CD8-positive, alpha-beta T cell (primary cell): ENCODE measurements at regions of chr20 and their contacts with region 1.

Region 1: GRCh38 chr20:3679749-3680700 is 1.8 kb downstream of the ADAM33 start:
- DNase-seq: no peak
- ATAC-seq: no peak
- H3K4me3 ChIP-seq: no peak overlapping the region
- H3K4me3 Mint-ChIP-seq: no peak overlapping the region
- H3K27ac ChIP-seq: no peak overlapping the region
- H3K27ac Mint-ChIP-seq: no peak overlapping the region
- H3K4me1 ChIP-seq: peaks cover 4% of the 10 kb centered on the region
- H3K4me1 Mint-ChIP-seq: peaks cover 10% of the 10 kb centered on the region
- H3K27me3 ChIP-seq: peaks cover 0 to 10% of the 10 kb centered on the region in 2 experiments
- H3K27me3 Mint-ChIP-seq: peaks cover 45% of the 10 kb centered on the region
- CTCF ChIP-seq: no peak

Region 2: GRCh38 chr20:3350422-3350821 is 329.6 kb before region 1 on chr20:
- CTCF ChIA-PET with region 1: no interaction called
- POLR2A ChIA-PET with region 1: no interaction called
- intact Hi-C with region 1: no loop called
- DNase-seq: no peak
- ATAC-seq: no peak
- H3K4me3 ChIP-seq: no peak overlapping the region
- H3K4me3 Mint-ChIP-seq: no peak overlapping the region
- H3K27ac ChIP-seq: no peak overlapping the region
- H3K27ac Mint-ChIP-seq: no peak overlapping the region
- H3K4me1 ChIP-seq: no peaks in the 10 kb centered on the region
- H3K4me1 Mint-ChIP-seq: no peaks in the 10 kb centered on the region
- H3K27me3 ChIP-seq: no peaks in the 10 kb centered on the region
- H3K27me3 Mint-ChIP-seq: no peaks in the 10 kb centered on the region
- CTCF ChIP-seq: no peak

Region 3: DNA sequence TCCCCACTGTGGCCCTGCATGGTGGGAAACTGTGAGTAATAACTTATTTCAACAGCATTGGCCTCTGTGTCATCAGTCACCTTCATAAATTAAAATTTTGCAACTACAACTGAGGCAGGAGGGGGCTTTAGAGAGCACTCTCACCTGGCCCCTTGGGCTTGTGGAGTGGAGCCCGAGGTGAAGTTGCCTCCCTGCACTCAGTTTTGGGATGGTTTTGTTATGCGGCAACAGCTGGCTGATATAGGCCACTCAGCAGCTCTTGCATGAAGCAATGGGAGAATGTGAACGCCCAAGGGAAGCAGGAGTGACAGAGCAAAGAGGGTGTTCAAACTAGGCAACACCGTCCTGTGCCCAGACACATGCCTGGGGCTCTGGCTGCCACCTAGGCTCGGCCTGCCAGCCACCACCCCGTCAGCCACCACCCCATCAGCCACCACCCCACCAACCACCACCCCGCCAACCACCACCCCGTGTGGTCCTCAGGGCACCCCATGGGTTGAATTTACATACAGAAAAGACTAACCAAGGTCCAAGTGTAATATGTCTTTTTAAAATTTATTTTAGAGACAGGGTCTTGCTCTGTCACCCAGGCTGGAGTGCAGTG is 12.5 kb before region 1 on chr20:
- CTCF ChIA-PET with region 1: interaction called, 29 read pairs
- POLR2A ChIA-PET with region 1: interaction called, 3 read pairs
- intact Hi-C with region 1: no loop called
- DNase-seq: no peak
- ATAC-seq: no peak
- H3K4me3 ChIP-seq: no peak overlapping the region
- H3K4me3 Mint-ChIP-seq: no peak overlapping the region
- H3K27ac ChIP-seq: no peak overlapping the region
- H3K27ac Mint-ChIP-seq: no peak overlapping the region
- H3K4me1 ChIP-seq: peaks cover 16% of the 10 kb centered on the region
- H3K4me1 Mint-ChIP-seq: peaks cover 22% of the 10 kb centered on the region
- H3K27me3 ChIP-seq: peaks cover 0 to 2% of the 10 kb centered on the region in 2 experiments
- H3K27me3 Mint-ChIP-seq: peaks cover 34% of the 10 kb centered on the region
- CTCF ChIP-seq: no peak

Region 4: GRCh38 chr20:4592316-4593148 is 912.5 kb after region 1 on chr20:
- CTCF ChIA-PET with region 1: no interaction called
- POLR2A ChIA-PET with region 1: no interaction called
- intact Hi-C with region 1: loop called (anchors 1 to 2 kb)
- DNase-seq: peak; percentile 11 to 77 (median 50)
- ATAC-seq: peak; percentile 79
- H3K4me3 ChIP-seq: peak overlapping the region; percentile 30 to 61
- H3K4me3 Mint-ChIP-seq: peak overlapping the region; percentile 78
- H3K27ac ChIP-seq: no peak overlapping the region
- H3K27ac Mint-ChIP-seq: no peak overlapping the region
- H3K4me1 ChIP-seq: peaks cover 15% of the 10 kb centered on the region
- H3K4me1 Mint-ChIP-seq: peaks cover 9% of the 10 kb centered on the region
- H3K27me3 ChIP-seq: peaks cover 0 to 3% of the 10 kb centered on the region in 2 experiments
- H3K27me3 Mint-ChIP-seq: peaks cover 14% of the 10 kb centered on the region
- CTCF ChIP-seq: peak; percentile 94